Activated T-helper 1 cell treated with anti-CD3 and anti-CD28 coated beads, Interleukin-12 subunit alpha, Interleukin-12 subunit beta, Interleukin-2, Interleukin-4 antibody, amounts not matched to agents 30 ng/mL and 10 ng/mL and 1 ng/mL, durations not matched to agents 14 hours and 24 hours and 36 hours (primary cell): ENCODE measurements at regions of chr6 and their contacts with region 1.

Region 1: DNA sequence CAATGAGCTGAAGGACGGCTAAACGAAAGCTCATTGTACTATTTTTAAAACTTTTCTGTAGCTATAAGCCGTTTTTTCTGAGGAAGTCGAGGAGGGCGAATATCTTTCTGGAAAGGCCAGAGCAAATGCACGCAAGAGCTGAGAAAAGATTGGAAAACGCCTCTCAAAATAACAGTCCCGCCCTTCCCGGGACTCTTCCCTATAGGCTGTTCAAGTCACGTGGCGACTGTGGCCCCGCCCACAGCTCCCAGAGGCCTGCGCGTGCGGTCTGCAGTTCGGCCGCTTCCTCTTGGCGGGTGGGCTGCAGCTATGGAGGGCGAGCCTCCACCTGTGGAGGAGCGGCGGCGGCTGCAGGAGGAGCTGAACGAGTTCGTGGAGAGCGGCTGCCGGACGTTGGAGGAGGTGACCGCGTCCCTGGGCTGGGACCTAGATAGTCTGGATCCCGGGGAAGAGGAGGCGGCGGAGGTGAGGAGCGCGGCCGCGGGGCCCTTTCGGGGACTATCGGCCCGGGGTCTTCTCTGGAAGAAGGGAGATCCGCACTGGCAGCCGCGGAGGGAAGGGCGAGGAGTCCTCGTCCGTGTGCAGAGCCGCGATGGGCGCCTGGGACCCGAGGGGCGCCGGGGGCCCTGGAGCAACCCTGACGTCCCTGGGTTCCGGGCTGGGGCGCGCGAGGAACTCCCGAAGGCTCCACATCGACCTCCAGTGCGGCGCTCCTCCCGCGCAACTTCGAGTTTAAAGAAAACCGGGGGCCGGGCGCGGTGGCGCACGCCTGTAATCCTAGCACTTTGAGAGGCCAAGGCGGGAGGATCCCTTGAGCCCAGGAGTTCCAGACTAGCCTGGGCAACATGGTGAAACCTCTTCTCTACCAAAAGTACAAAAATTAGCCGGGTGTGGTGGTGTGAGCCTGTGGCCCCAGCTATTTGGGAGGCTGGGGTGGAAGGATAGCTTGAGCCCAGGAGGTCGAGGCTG is at the start of gene SNRNP48:
- DNase-seq: peak; percentile 88
- H3K4me3 Mint-ChIP-seq: peak within 1 kb of the TSS; percentile 100
- H3K27ac Mint-ChIP-seq: peak within 1 kb of the TSS; percentile 95
- H3K4me1 Mint-ChIP-seq: peaks cover 40% of the 10 kb centered on the region
- H3K27me3 Mint-ChIP-seq: no peaks in the 10 kb centered on the region
- total RNA-seq, gene SNRNP48: 17.7 and 18.0 TPM in 2 replicates

Region 2: DNA sequence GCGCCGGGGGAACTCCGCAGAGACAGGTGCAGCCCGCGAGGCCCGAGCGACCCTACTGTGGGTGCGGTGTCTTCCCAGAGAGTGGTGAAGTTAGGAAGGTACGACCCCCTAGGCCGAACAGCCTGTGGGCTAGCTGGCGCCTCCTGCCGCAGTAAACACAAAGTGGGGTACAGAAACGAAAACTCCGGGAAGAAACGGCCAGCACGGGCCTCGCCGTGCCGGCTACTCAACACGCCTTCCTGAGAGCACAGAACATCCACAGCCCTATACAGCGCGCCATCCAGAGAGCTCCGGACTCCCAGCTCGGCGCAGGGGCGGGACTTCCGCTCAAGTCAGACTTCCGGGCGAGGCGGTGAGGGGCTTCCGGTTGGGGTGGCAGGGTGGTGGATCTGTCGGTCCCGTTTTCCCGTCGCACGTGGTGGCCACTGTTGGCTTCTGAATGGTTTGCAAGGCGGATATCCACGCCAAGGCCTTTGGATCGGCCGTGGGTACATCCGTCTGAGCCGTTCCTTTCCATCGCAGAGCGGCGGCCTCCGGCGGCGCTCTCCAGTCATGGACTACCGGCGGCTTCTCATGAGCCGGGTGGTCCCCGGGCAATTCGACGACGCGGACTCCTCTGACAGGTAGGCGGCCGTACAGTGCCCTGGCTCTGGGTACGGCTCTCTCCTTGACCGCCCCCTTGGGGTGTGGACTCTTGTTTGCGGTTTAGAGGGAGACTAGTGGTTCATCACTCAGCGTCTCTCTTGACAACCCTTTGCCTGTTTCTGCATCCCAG is 200.6 kb before region 1 on chr6 and contains the starts of genes CAGE1 and RIOK1:
- intact Hi-C with region 1: loop called (anchors 1 kb)
- DNase-seq: peak; percentile 93
- H3K4me3 Mint-ChIP-seq: peak within 1 kb of the TSS; percentile 92
- H3K27ac Mint-ChIP-seq: peak within 1 kb of the TSS; percentile 100
- H3K4me1 Mint-ChIP-seq: peaks cover 53% of the 10 kb centered on the region
- H3K27me3 Mint-ChIP-seq: no peaks in the 10 kb centered on the region
- total RNA-seq, gene CAGE1: 0.13 and 0.20 TPM in 2 replicates
- total RNA-seq, gene RIOK1: 61.4 and 67.2 TPM in 2 replicates

Region 3: DNA sequence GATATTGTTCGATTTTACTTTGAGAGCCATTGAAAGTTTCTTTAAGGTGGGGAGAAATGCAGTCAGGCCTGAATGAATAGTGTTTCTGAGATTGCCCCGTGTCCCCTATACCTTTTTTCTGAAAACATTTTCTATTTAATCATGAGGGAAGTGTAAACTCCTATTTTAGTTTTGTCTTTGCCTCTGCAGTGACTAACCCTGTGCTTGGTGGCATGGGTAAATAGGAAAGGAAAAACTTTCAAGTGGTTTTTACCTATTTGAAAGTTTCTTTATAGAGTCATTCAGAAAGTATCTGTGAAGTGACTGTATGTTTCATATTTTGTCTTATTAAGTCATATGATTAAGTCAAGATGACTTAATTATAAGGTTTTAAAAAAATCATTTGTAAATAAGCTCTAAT is 14.3 kb after region 1 on chr6:
- intact Hi-C with region 1: loop called (anchors 2 kb)
- DNase-seq: no peak
- H3K4me3 Mint-ChIP-seq: no peak overlapping the region
- H3K27ac Mint-ChIP-seq: peak overlapping the region; percentile 4
- H3K4me1 Mint-ChIP-seq: peaks cover 22% of the 10 kb centered on the region
- H3K27me3 Mint-ChIP-seq: no peaks in the 10 kb centered on the region

Region 4: DNA sequence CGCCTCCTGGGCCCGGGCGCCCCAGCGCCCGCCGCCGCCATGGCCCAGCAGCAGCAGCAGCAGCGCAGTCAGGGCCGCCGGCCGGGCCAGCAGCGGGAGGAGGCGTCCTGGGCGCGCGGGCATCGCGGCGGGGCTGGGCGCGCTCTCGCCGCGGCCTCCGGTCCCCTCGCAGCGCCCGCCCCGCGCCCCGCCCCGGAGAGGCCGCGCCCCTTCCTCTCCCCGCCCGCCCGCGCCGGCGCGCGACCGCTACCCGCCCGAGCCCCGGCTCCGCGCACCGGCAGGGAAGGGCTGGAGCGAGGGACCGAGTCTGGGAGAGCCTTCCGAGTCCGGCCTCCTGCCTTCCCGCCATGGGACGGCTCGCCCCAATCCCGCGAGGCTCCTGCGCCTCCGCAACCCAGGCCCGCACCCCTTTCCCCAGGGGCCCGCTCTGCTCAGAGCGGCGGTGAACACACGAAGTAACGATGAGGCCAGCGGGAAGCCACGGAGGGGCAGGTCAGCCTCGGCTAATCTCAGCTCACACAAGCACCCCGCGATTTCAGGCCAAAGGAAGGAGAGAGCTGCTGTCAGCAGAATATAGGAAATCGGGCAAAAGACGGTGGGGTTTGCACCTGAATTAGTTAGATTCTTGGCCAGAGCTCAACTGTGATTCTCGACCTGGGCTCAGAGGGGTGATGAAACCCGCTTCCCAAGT is 320.6 kb after region 1 on chr6 and contains the start of gene TXNDC5:
- intact Hi-C with region 1: loop called (anchors 2 kb)
- DNase-seq: peak; percentile 68
- H3K4me3 Mint-ChIP-seq: peak within 1 kb of the TSS; percentile 87
- H3K27ac Mint-ChIP-seq: peak within 1 kb of the TSS; percentile 64
- H3K4me1 Mint-ChIP-seq: peaks cover 20% of the 10 kb centered on the region
- H3K27me3 Mint-ChIP-seq: no peaks in the 10 kb centered on the region
- total RNA-seq, gene TXNDC5: 119 and 121 TPM in 2 replicates